CD4-positive, alpha-beta T cell (primary cell): ENCODE measurements at regions of chr17 and their contacts with region 1.

Region 1: GRCh38 chr17:83051395-83052233 is 27.8 kb upstream of the METRNL start:
- DNase-seq: peak; percentile 95 to 99 (median 98)
- ATAC-seq: peak; percentile 77
- H3K4me3 ChIP-seq: peak overlapping the region; percentile 53
- H3K4me3 Mint-ChIP-seq: peak overlapping the region; percentile 88
- H3K27ac ChIP-seq: peak overlapping the region; percentile 77 to 85
- H3K27ac Mint-ChIP-seq: peak overlapping the region; percentile 90
- H3K4me1 ChIP-seq: peaks cover 52% of the 10 kb centered on the region
- H3K4me1 Mint-ChIP-seq: peaks cover 39% of the 10 kb centered on the region
- H3K27me3 ChIP-seq: no peaks in the 10 kb centered on the region
- H3K27me3 Mint-ChIP-seq: no peaks in the 10 kb centered on the region
- CTCF ChIP-seq: no peak

Region 2: DNA sequence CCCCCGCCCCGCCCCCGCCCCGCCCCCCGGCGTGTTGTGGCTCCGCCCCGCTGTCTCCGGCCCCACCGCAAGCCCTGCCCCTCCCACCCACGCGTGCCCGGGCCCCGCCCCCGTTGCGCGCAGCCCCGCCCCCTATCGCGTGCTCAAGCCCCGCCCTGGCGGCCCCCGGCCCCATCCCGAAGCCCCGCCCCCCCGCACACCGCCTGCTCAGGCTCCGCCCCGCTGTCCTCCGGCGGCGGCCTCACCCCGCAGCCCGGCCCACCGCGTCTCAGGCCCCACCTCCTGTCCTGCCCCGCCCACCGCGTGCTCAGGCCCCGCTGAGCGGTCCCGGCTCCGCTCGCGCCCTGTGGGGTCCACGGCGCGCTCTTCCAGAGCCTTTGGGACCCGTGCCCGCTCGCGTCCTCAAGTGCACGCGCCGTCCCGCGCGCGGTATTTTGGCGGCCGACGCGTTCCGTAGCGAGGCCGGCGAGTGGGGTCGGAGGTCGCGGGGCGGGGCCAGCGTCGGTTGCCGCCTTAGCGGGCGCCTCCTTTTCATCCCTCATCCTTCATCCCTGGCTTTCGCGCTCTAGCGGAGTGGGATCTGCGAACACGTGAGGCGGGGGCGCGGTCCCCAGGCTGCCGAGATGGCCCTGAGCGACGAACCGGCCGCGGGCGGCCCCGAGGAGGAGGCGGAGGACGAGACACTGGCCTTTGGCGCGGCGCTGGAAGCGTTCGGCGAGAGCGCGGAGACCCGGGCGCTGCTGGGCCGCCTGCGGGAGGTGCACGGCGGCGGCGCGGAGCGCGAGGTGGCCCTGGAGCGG is 299.8 kb before region 1 on chr17 and contains the start of gene TBCD:
- CTCF ChIA-PET with region 1: no interaction called
- POLR2A ChIA-PET with region 1: no interaction called
- intact Hi-C with region 1: loop called in 1 of 2 experiments (anchors 2 kb)
- DNase-seq: peak; percentile 77 to 96 (median 89)
- ATAC-seq: peak; percentile 71
- H3K4me3 ChIP-seq: peak within 1 kb of the TSS; percentile 63
- H3K4me3 Mint-ChIP-seq: peak within 1 kb of the TSS; percentile 89
- H3K27ac ChIP-seq: peak within 1 kb of the TSS in 1 of 2 donors; percentile 41
- H3K27ac Mint-ChIP-seq: no peak within 1 kb of the TSS
- H3K4me1 ChIP-seq: peaks cover 32% of the 10 kb centered on the region
- H3K4me1 Mint-ChIP-seq: peaks cover 25% of the 10 kb centered on the region
- H3K27me3 ChIP-seq: no peaks in the 10 kb centered on the region
- H3K27me3 Mint-ChIP-seq: no peaks in the 10 kb centered on the region
- CTCF ChIP-seq: no peak
- total RNA-seq, gene TBCD: 74.6 to 80.3 TPM

Region 3: DNA sequence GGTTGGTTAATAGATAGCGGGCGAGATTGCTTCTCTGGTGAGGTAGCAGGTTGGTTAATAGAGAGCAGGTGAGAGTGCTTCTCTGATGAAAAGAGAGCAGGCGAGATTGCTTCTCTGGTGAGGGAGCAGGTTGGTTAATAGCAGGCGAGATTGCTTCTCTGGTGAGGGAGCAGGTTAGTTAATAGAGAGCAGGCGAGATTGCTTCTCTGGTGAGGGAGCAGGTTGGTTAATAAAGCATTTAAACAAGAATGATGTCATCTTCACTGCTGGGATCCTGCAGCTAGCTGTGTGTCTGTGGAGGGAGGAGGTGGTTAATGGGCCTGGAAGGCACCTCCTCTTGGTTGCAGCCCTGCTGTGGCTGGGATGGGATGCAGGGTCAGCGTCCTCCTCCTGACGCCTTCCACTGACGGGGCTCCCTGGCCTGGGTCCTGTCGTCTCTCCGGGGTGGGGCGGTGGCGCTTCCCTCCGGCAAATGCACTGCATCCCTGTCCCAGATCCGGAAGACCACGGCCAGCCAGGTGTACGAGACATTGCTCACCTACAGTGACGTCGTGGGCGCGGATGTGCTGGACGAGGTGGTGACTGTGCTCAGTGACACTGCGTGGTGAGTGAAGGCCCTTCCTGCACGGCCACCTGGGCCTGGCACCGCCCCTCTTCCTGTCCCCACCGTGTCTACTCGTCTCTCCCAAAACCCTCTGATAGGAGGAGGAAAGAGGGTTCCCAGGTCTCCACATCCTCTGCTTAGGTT is 112.6 kb before region 1 on chr17:
- CTCF ChIA-PET with region 1: no interaction called
- POLR2A ChIA-PET with region 1: no interaction called
- intact Hi-C with region 1: no loop called
- DNase-seq: peak in 1 of 14 experiments; percentile 20
- ATAC-seq: no peak
- H3K4me3 ChIP-seq: no peak overlapping the region
- H3K4me3 Mint-ChIP-seq: no peak overlapping the region
- H3K27ac ChIP-seq: no peak overlapping the region
- H3K27ac Mint-ChIP-seq: no peak overlapping the region
- H3K4me1 ChIP-seq: no peaks in the 10 kb centered on the region
- H3K4me1 Mint-ChIP-seq: no peaks in the 10 kb centered on the region
- H3K27me3 ChIP-seq: no peaks in the 10 kb centered on the region
- H3K27me3 Mint-ChIP-seq: no peaks in the 10 kb centered on the region
- CTCF ChIP-seq: no peak

Region 4: DNA sequence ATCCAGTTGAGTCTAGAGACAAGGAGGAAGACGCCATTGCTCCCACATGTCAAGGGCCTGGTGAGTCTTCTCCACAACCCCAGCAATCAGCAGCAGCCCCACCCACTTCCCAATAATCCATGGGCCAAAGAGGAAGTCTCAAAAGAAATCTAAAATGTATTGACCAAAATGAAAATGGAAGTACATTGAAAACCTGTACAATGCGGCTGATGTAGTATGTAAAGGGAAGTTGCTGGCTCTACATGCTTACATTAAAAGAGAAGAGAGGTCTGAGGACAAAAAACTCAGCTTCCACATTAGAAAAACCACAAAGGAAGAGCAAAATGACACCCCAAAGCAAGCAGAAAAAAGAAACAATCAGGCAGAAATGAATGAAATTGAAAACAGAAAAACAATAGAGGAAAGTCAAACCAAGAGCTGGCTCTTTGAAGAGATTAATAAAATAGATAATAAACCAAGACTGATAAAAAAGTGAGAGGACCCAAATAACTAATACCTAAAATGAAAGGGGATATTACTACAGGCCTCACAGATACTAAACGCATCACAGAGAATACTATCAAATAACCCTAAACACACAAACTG is 72.8 kb before region 1 on chr17:
- CTCF ChIA-PET with region 1: no interaction called
- POLR2A ChIA-PET with region 1: interaction called, 12 read pairs
- intact Hi-C with region 1: no loop called
- DNase-seq: peak in 3 of 14 experiments; percentile 46 to 68 (median 51)
- ATAC-seq: peak; percentile 75
- H3K4me3 ChIP-seq: peak overlapping the region; percentile 31
- H3K4me3 Mint-ChIP-seq: peak overlapping the region; percentile 5
- H3K27ac ChIP-seq: peak overlapping the region in 1 of 2 donors; percentile 40
- H3K27ac Mint-ChIP-seq: peak overlapping the region; percentile 16
- H3K4me1 ChIP-seq: peaks cover 13% of the 10 kb centered on the region
- H3K4me1 Mint-ChIP-seq: peaks cover 38% of the 10 kb centered on the region
- H3K27me3 ChIP-seq: no peaks in the 10 kb centered on the region
- H3K27me3 Mint-ChIP-seq: no peaks in the 10 kb centered on the region
- CTCF ChIP-seq: no peak

Region 5: DNA sequence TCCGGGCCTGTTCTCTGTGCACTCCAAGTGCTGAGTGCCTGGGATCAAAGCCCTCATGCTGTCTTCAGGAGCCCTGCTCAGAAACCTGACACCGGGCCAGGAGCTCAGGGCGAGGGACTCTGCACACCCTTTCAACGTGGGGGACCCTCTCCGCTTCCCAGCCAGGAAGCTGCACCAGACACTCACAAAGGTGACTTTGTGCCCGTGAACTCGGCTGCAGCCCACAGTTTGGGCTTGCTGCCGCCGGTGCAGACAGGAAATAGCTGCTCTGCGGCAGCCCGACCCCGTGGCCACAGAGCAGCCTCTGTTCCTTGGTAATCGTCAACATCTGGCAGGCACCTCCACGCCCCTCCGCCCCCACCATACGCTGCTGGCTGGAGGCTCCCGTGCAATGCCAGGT is 65.6 kb before region 1 on chr17:
- CTCF ChIA-PET with region 1: no interaction called
- POLR2A ChIA-PET with region 1: interaction called, 10 read pairs
- intact Hi-C with region 1: loop called in 1 of 2 experiments (anchors 5 kb)
- DNase-seq: peak; percentile 46 to 81 (median 69)
- ATAC-seq: peak; percentile 90
- H3K4me3 ChIP-seq: peak overlapping the region; percentile 21
- H3K4me3 Mint-ChIP-seq: peak overlapping the region; percentile 84
- H3K27ac ChIP-seq: peak overlapping the region in 1 of 2 donors; percentile 13
- H3K27ac Mint-ChIP-seq: peak overlapping the region; percentile 94
- H3K4me1 ChIP-seq: peaks cover 23% of the 10 kb centered on the region
- H3K4me1 Mint-ChIP-seq: peaks cover 68% of the 10 kb centered on the region
- H3K27me3 ChIP-seq: no peaks in the 10 kb centered on the region
- H3K27me3 Mint-ChIP-seq: no peaks in the 10 kb centered on the region
- CTCF ChIP-seq: no peak

Region 6: GRCh38 chr17:83079352-83079747 is 27.7 kb after region 1 on chr17 and contains the start of gene METRNL:
- CTCF ChIA-PET with region 1: no interaction called
- POLR2A ChIA-PET with region 1: interaction called, 7 read pairs
- intact Hi-C with region 1: loop called (anchors 1 to 2 kb)
- DNase-seq: peak in 13 of 14 experiments; percentile 27 to 77 (median 50)
- ATAC-seq: peak; percentile 37
- H3K4me3 ChIP-seq: peak within 1 kb of the TSS; percentile 45
- H3K4me3 Mint-ChIP-seq: peak within 1 kb of the TSS; percentile 58
- H3K27ac ChIP-seq: no peak within 1 kb of the TSS
- H3K27ac Mint-ChIP-seq: no peak within 1 kb of the TSS
- H3K4me1 ChIP-seq: peaks cover 43% of the 10 kb centered on the region
- H3K4me1 Mint-ChIP-seq: peaks cover 7% of the 10 kb centered on the region
- H3K27me3 ChIP-seq: peaks cover 10 to 12% of the 10 kb centered on the region in 2 experiments
- H3K27me3 Mint-ChIP-seq: peaks cover 23% of the 10 kb centered on the region
- CTCF ChIP-seq: no peak
- total RNA-seq, gene METRNL: 24.5 to 26.9 TPM

Region 7: DNA sequence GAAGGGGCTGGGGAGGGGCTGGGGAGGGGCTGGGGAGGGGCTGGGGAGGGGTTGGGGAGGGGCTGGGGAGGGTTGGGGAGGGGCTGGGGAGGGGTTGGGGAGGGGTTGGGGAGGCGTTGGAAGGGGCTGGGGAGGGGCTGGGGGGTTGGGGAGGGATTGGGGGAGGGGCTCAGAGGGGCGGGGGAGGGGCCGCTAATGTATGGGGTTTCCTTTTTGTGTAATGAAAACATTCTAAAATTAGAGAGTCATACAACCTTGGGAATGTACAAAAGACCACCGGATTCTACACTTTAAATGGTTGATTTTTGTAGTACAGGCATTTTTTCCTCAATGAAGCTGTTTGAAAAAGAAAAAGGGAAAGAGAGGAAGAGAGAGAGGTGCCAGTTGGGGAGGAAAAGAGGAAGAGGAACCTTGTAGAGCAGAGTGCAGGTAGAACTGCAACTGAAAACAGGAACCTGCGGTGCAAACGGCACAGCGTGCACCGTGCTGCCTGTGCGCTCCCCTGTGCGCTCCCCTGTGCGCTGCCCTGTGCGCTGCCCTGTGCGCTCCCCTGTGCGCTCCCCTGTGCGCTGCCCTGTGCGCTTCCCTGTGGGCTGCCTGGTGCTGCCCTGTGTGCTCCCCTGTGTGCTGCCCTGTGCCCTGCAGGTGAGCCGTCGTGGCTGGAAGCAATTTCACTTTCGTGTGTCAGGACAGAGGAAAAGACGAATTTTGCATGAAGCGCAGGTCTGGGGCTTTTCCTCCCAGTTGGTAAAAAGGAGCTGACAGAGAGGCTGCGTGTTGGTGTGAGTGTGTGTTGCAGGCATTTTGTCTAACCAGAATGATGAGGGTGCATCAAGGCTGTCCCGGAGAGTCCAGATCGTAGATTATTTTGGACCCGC is 68.6 kb after region 1 on chr17:
- CTCF ChIA-PET with region 1: no interaction called
- POLR2A ChIA-PET with region 1: no interaction called
- intact Hi-C with region 1: no loop called
- DNase-seq: peak in 3 of 14 experiments; percentile 46 to 57 (median 56)
- ATAC-seq: peak; percentile 66
- H3K4me3 ChIP-seq: peak overlapping the region; percentile 26
- H3K4me3 Mint-ChIP-seq: peak overlapping the region; percentile 81
- H3K27ac ChIP-seq: no peak overlapping the region
- H3K27ac Mint-ChIP-seq: peak overlapping the region; percentile 13
- H3K4me1 ChIP-seq: peaks cover 17% of the 10 kb centered on the region
- H3K4me1 Mint-ChIP-seq: peaks cover 16% of the 10 kb centered on the region
- H3K27me3 ChIP-seq: peaks cover 13% of the 10 kb centered on the region in 2 experiments
- H3K27me3 Mint-ChIP-seq: peaks cover 55% of the 10 kb centered on the region
- CTCF ChIP-seq: no peak